CD8-positive, alpha-beta T cell (primary cell): ENCODE measurements at regions of chr14 and their contacts with region 1.

Region 1: GRCh38 chr14:24058260-24058950 is 6.6 kb downstream of the CARMIL3 start:
- DNase-seq: peak in 4 of 9 experiments; percentile 25 to 71 (median 58)
- ATAC-seq: peak; percentile 86
- H3K4me3 ChIP-seq: no peak overlapping the region
- H3K4me3 Mint-ChIP-seq: no peak overlapping the region
- H3K27ac ChIP-seq: no peak overlapping the region
- H3K27ac Mint-ChIP-seq: peak overlapping the region; percentile 53
- H3K4me1 ChIP-seq: no peaks in the 10 kb centered on the region
- H3K4me1 Mint-ChIP-seq: peaks cover 3% of the 10 kb centered on the region
- H3K27me3 ChIP-seq: no peaks in the 10 kb centered on the region
- H3K27me3 Mint-ChIP-seq: peaks cover 3% of the 10 kb centered on the region
- CTCF ChIP-seq: peak; percentile 94

Region 2: GRCh38 chr14:24075485-24076301 is 17.3 kb after region 1 on chr14:
- CTCF ChIA-PET with region 1: interaction called, 81 read pairs
- POLR2A ChIA-PET with region 1: interaction called, 15 read pairs
- intact Hi-C with region 1: no loop called
- DNase-seq: peak in 1 of 9 experiments; percentile 3
- ATAC-seq: no peak
- H3K4me3 ChIP-seq: no peak overlapping the region
- H3K4me3 Mint-ChIP-seq: no peak overlapping the region
- H3K27ac ChIP-seq: no peak overlapping the region
- H3K27ac Mint-ChIP-seq: no peak overlapping the region
- H3K4me1 ChIP-seq: peaks cover 6% of the 10 kb centered on the region
- H3K4me1 Mint-ChIP-seq: peaks cover 11% of the 10 kb centered on the region
- H3K27me3 ChIP-seq: no peaks in the 10 kb centered on the region
- H3K27me3 Mint-ChIP-seq: peaks cover 3% of the 10 kb centered on the region
- CTCF ChIP-seq: no peak

Region 3: GRCh38 chr14:24086193-24086955 is 28.0 kb after region 1 on chr14:
- CTCF ChIA-PET with region 1: interaction called, 873 read pairs
- POLR2A ChIA-PET with region 1: interaction called, 15 read pairs
- intact Hi-C with region 1: loop called (anchors 1 kb)
- DNase-seq: no peak
- ATAC-seq: no peak
- H3K4me3 ChIP-seq: no peak overlapping the region
- H3K4me3 Mint-ChIP-seq: no peak overlapping the region
- H3K27ac ChIP-seq: no peak overlapping the region
- H3K27ac Mint-ChIP-seq: no peak overlapping the region
- H3K4me1 ChIP-seq: peaks cover 10% of the 10 kb centered on the region
- H3K4me1 Mint-ChIP-seq: peaks cover 17% of the 10 kb centered on the region
- H3K27me3 ChIP-seq: no peaks in the 10 kb centered on the region
- H3K27me3 Mint-ChIP-seq: no peaks in the 10 kb centered on the region
- CTCF ChIP-seq: no peak

Region 4: DNA sequence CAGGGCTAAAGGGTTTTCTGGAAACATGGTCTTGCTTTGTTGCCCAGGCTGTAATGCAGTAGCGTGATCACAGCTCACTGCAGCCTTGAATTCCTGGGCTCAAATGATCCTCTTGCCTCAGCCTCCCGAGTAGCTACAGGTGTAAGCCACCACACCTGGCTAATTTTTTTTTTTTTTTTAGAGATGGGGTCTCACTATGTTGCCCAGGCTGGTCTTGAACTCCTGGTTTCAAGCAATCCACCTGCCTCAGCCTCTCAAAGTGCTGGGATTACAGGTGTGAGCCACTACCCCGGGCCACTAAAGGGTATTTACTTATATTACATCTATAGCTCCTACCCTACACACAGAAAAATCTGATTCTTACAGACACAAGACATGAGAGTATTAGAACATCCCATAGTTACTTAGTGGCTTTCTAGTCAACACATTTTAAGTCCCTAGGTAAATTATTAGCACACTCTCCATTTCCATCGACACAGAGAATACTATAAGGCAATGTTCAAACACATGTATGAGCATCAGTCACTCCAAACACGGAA is 50.0 kb after region 1 on chr14:
- CTCF ChIA-PET with region 1: interaction called, 873 read pairs
- POLR2A ChIA-PET with region 1: interaction called, 12 read pairs
- intact Hi-C with region 1: loop called (anchors 1 kb)
- DNase-seq: no peak
- ATAC-seq: peak; percentile 25
- H3K4me3 ChIP-seq: no peak overlapping the region
- H3K4me3 Mint-ChIP-seq: no peak overlapping the region
- H3K27ac ChIP-seq: peak overlapping the region; percentile 44 to 80
- H3K27ac Mint-ChIP-seq: peak overlapping the region; percentile 95
- H3K4me1 ChIP-seq: peaks cover 16% of the 10 kb centered on the region
- H3K4me1 Mint-ChIP-seq: peaks cover 12% of the 10 kb centered on the region
- H3K27me3 ChIP-seq: no peaks in the 10 kb centered on the region
- H3K27me3 Mint-ChIP-seq: no peaks in the 10 kb centered on the region
- CTCF ChIP-seq: no peak

Region 5: GRCh38 chr14:24188251-24189058 is 130.1 kb after region 1 on chr14 and contains the start of gene IPO4:
- CTCF ChIA-PET with region 1: interaction called, 6 read pairs
- POLR2A ChIA-PET with region 1: no interaction called
- intact Hi-C with region 1: loop called in 1 of 2 experiments (anchors 1 kb)
- DNase-seq: peak; percentile 86 to 99 (median 94)
- ATAC-seq: peak; percentile 91
- H3K4me3 ChIP-seq: peak within 1 kb of the TSS; percentile 77 to 82
- H3K4me3 Mint-ChIP-seq: peak within 1 kb of the TSS; percentile 89
- H3K27ac ChIP-seq: peak within 1 kb of the TSS; percentile 61 to 89
- H3K27ac Mint-ChIP-seq: peak within 1 kb of the TSS; percentile 87
- H3K4me1 ChIP-seq: peaks cover 17% of the 10 kb centered on the region
- H3K4me1 Mint-ChIP-seq: peaks cover 38% of the 10 kb centered on the region
- H3K27me3 ChIP-seq: no peaks in the 10 kb centered on the region
- H3K27me3 Mint-ChIP-seq: no peaks in the 10 kb centered on the region
- CTCF ChIP-seq: no peak
- total RNA-seq, gene IPO4: 69.2 to 75.6 TPM

Region 6: DNA sequence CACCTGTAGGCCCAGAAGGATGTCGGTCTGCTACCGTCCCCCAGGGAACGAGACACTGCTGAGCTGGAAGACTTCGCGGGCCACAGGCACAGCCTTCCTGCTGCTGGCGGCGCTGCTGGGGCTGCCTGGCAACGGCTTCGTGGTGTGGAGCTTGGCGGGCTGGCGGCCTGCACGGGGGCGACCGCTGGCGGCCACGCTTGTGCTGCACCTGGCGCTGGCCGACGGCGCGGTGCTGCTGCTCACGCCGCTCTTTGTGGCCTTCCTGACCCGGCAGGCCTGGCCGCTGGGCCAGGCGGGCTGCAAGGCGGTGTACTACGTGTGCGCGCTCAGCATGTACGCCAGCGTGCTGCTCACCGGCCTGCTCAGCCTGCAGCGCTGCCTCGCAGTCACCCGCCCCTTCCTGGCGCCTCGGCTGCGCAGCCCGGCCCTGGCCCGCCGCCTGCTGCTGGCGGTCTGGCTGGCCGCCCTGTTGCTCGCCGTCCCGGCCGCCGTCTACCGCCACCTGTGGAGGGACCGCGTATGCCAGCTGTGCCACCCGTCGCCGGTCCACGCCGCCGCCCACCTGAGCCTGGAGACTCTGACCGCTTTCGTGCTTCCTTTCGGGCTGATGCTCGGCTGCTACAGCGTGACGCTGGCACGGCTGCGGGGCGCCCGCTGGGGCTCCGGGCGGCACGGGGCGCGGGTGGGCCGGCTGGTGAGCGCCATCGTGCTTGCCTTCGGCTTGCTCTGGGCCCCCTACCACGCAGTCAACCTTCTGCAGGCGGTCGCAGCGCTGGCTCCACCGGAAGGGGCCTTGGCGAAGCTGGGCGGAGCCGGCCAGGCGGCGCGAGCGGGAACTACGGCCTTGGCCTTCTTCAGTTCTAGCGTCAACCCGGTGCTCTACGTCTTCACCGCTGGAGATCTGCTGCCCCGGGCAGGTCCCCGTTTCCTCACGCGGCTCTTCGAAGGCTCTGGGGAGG is 252.5 kb after region 1 on chr14 and contains the start of gene LTB4R:
- CTCF ChIA-PET with region 1: interaction called, 15 read pairs
- POLR2A ChIA-PET with region 1: no interaction called
- intact Hi-C with region 1: no loop called
- DNase-seq: peak; percentile 41 to 89 (median 68)
- ATAC-seq: peak; percentile 80
- H3K4me3 ChIP-seq: peak within 1 kb of the TSS; percentile 52 to 57
- H3K4me3 Mint-ChIP-seq: peak within 1 kb of the TSS; percentile 75
- H3K27ac ChIP-seq: peak within 1 kb of the TSS; percentile 63 to 78
- H3K27ac Mint-ChIP-seq: peak within 1 kb of the TSS; percentile 90
- H3K4me1 ChIP-seq: peaks cover 62% of the 10 kb centered on the region
- H3K4me1 Mint-ChIP-seq: peaks cover 72% of the 10 kb centered on the region
- H3K27me3 ChIP-seq: no peaks in the 10 kb centered on the region
- H3K27me3 Mint-ChIP-seq: no peaks in the 10 kb centered on the region
- CTCF ChIP-seq: no peak
- total RNA-seq, gene LTB4R: 15.4 to 16.7 TPM